MCF 10A (cell line): ENCODE measurements at regions of chr9 and their contacts with region 1.

Region 1: GRCh38 chr9:69847491-69847890 is 26.9 kb downstream of the CFAP95 start:
- DNase-seq: no peak
- H3K4me3 Mint-ChIP-seq: no peak overlapping the region
- H3K27ac Mint-ChIP-seq: no peak overlapping the region
- H3K4me1 Mint-ChIP-seq: no peaks in the 10 kb centered on the region
- H3K27me3 Mint-ChIP-seq: peaks cover 55% of the 10 kb centered on the region
- CTCF ChIP-seq: no peak

Region 2: GRCh38 chr9:69785757-69786156 is 61.7 kb before region 1 on chr9:
- CTCF ChIA-PET with region 1: no interaction called
- POLR2A ChIA-PET with region 1: no interaction called
- intact Hi-C with region 1: loop called (anchors 10 kb)
- DNase-seq: peak; percentile 25
- H3K4me3 Mint-ChIP-seq: no peak overlapping the region
- H3K27ac Mint-ChIP-seq: no peak overlapping the region
- H3K4me1 Mint-ChIP-seq: no peaks in the 10 kb centered on the region
- H3K27me3 Mint-ChIP-seq: peaks cover 11% of the 10 kb centered on the region
- CTCF ChIP-seq: no peak